ENCODE measurements at regions of chr12 and their contacts with region 1.

Region 1: DNA sequence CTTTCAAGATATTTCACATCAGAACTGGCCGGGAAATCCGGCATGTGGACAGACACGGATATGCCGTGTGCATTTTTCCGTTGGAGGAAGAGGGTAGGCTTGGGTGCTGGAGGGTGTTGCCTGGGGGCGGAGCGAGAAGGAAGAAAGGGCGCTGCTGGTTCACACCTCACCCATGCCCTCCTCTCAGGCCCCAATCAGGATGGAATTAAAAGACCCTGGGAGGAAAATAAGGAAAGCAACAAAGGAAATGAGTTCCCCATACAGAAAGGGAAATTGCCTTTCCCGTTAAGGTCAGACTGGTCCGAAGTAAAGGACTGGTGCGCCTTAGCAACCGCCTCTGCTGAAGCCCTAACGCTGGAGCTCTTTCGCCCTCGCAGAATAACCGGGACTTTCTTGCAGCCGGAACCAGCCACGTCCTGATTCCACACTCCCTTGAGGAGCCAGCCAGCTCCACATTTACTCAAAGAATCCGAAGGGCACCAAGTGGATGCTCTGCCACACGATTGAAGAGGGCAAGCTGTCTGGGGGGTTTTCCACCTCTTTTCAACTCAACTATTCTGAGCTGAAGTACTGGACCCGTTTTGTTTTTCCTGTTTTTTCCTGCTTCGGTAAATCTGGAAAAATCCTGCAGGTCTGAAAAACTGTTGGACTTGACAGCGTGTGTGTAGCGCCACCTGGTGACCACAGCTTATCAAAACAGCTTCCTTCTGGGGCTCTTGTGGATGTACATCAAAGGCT is 37.7 kb upstream of the BCL2L14 start:
- DNase-seq: peak; percentile 88

Region 2: DNA sequence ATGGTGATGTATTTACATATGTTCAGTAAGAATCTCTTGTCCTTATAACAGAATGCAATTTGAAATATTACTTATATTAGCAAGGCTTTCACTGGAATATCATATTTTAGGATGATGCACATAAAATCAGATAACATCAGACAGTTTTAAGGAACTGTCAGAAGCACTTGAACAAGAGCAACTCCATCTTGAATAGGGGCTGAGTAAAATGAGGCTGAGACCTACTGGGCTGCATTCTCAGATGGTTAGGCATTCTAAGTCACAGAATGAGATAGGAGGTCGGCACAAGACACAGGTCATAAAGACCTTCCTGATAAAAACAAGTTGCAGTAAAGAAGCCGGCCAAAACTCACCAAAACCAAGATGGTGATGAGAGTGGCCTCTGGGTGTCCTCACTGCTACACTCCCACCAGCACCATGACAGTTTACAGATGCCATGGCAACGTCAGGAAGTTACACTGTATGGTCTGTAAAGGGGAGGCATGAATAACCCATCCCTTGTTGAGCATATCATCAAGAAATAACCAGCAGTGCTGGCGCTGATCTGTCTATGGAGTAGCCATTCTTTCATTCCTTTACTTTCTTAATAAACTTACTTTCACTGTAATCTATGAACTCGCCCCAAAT is 411.1 kb before region 1 on chr12:
- intact Hi-C with region 1: loop called (anchors 2 kb)
- DNase-seq: no peak

Region 3: DNA sequence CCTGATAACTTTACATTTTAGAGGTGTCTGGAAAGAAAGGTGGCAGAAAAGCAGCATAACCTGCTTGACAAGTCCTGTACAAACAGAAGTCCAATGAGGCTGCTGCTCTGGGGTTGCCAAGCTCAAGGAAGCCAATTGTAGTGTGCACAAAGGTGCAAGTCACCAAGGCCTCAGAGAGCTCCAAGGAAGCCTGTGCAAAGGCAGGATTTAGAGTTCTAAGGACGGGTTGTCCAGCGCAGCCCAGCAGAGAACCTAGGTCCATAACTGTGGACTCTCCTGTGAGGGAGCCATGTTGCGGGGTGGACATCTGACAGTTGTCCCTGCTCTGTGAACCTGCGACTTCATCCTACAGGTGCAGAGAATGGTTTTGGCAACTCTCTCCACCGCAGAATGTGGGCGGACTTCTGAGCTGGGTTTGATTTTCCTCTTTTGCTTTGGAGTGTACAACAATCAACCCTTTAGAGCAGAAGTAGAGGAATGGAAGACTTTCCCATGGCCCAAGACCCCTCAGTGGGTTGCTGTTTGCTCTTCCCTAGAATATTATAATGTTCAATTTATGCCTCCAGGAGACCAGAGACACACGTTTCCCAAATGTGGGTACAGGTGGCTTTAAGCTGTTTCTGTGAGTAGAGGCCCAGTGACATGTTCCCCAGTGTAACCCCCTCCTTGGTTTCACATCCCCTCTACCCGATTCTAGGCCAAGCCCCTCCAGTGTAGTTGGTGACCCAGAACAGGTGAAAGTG is 302.6 kb before region 1 on chr12:
- intact Hi-C with region 1: loop called (anchors 10 kb)
- DNase-seq: no peak